Aorta (tissue), 5 donors: ENCODE measurements at regions of chr10 and their contacts with region 1.

Region 1: GRCh38 chr10:10279906-10280305 is 737.8 kb upstream of the CELF2 start:
- DNase-seq: no peak
- ATAC-seq: no peak
- H3K4me3 ChIP-seq: no peak overlapping the region
- H3K27ac ChIP-seq: no peak overlapping the region
- H3K4me1 ChIP-seq: no peaks in the 10 kb centered on the region
- H3K27me3 ChIP-seq: no peaks in the 10 kb centered on the region

Region 2: DNA sequence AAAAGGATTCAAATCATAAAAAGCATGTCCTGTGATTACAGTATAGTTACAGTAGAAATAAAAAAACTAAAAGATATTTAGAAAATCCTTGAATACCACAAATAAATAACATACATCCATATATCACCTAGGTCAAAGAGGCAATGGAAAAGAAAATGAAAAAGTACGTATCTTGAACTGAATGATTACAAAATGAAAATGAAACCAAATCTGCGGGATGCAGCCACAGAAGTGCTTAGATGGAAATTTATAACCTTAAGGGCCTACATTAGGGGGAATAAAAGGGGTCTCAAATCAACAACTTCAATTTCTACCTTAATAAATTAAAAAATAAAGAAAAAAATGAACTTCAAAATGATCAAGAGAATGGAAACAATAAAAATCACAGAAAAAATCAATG is 141.2 kb before region 1 on chr10:
- intact Hi-C with region 1: no loop called
- DNase-seq: no peak
- ATAC-seq: no peak
- H3K4me3 ChIP-seq: no peak overlapping the region
- H3K27ac ChIP-seq: no peak overlapping the region
- H3K4me1 ChIP-seq: no peaks in the 10 kb centered on the region
- H3K27me3 ChIP-seq: no peaks in the 10 kb centered on the region

Region 3: GRCh38 chr10:10149899-10150298 is 130.0 kb before region 1 on chr10:
- intact Hi-C with region 1: loop called in 1 of 2 experiments (anchors 10 kb)
- DNase-seq: no peak
- ATAC-seq: no peak
- H3K4me3 ChIP-seq: no peak overlapping the region
- H3K27ac ChIP-seq: no peak overlapping the region
- H3K4me1 ChIP-seq: peaks cover 3 to 9% of the 10 kb centered on the region in 2 donors
- H3K27me3 ChIP-seq: no peaks in the 10 kb centered on the region